ENCODE measurements at regions of chr7 and their contacts with region 1.

Region 1: DNA sequence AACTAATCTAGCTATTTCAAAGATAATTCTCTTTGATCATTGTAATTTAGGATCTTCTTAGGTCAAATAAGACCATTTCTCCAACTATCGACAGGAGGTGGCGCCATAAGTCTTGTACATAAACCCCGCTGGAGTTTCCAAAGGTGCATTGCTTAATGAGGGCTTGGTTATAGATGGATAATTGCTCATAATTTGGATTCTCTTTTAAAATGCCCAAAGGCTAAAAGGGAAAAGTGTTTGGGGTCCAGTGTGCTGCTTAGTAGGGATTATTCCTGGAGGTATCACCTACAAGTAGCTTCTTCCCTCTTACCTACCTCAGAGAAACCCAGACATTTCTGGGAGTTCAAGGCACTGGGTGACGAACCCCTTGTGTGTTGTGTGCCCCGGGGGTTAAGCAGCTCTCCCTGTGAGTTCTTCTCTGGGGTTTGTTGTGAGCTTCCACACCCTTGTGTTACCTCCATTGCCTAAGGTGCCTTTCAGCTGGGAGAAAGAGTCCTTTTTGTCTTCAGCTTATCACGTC is 75.2 kb downstream of the PAXIP1 start:
- DNase-seq: peak; percentile 88
- ATAC-seq: peak; percentile 65
- H3K4me3 Mint-ChIP-seq: peak overlapping the region; percentile 99
- H3K27ac Mint-ChIP-seq: peak overlapping the region; percentile 96
- H3K4me1 Mint-ChIP-seq: peaks cover 22% of the 10 kb centered on the region
- H3K27me3 Mint-ChIP-seq: no peaks in the 10 kb centered on the region

Region 2: GRCh38 chr7:154953006-154953684 is 25.5 kb after region 1 on chr7:
- CTCF ChIA-PET with region 1: interaction called, 90 read pairs
- POLR2A ChIA-PET with region 1: interaction called, 3 read pairs
- intact Hi-C with region 1: loop called (anchors 1 kb)
- DNase-seq: peak; percentile 83
- ATAC-seq: peak; percentile 57
- H3K4me3 Mint-ChIP-seq: no peak overlapping the region
- H3K27ac Mint-ChIP-seq: no peak overlapping the region
- H3K4me1 Mint-ChIP-seq: no peaks in the 10 kb centered on the region
- H3K27me3 Mint-ChIP-seq: no peaks in the 10 kb centered on the region

Region 3: DNA sequence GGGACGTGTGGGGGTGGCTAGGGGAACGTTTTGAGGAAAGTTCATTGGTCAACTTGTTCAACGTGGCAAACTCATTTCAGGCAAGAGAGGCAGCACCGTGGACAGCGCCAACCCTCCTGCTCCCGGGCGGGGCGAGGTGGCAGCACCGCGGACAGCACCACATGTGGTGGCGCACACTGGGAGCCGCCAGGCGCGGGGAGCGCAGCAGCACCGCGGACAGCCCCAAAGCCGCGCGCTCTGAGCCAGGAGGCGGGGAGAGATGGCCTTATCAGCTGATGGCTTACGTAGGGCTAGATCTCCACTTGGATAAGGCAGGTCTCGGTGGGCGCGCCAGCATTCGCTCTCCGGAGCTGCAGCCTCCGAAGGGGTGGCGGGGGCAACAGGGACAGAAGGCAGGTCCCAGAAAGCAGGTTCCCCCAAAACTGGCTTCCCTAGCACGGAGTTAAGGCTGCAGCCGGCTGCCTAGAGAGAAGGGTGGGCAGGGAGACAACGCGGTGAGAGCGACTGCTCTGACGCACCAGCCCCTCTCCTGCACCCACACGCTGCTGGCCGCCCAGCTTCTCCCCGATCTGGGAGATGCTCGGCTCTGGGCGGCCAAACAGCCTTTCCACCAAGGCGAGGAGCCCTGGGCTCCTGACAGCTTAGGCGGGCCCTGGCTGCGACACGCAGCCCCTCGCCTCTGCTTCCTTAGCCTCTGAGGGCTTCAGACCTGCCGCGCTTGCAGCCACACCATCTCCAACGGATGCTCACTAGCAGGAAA is 142.5 kb after region 1 on chr7 and contains the start of gene HTR5A:
- CTCF ChIA-PET with region 1: interaction called, 4 read pairs
- POLR2A ChIA-PET with region 1: no interaction called
- intact Hi-C with region 1: loop called in 1 of 2 experiments (anchors 1 kb)
- DNase-seq: peak; percentile 93
- ATAC-seq: peak; percentile 100
- H3K4me3 Mint-ChIP-seq: no peak within 1 kb of the TSS
- H3K27ac Mint-ChIP-seq: no peak within 1 kb of the TSS
- H3K4me1 Mint-ChIP-seq: no peaks in the 10 kb centered on the region
- H3K27me3 Mint-ChIP-seq: peaks cover 32% of the 10 kb centered on the region
- total RNA-seq, gene HTR5A: not detected

Region 4: DNA sequence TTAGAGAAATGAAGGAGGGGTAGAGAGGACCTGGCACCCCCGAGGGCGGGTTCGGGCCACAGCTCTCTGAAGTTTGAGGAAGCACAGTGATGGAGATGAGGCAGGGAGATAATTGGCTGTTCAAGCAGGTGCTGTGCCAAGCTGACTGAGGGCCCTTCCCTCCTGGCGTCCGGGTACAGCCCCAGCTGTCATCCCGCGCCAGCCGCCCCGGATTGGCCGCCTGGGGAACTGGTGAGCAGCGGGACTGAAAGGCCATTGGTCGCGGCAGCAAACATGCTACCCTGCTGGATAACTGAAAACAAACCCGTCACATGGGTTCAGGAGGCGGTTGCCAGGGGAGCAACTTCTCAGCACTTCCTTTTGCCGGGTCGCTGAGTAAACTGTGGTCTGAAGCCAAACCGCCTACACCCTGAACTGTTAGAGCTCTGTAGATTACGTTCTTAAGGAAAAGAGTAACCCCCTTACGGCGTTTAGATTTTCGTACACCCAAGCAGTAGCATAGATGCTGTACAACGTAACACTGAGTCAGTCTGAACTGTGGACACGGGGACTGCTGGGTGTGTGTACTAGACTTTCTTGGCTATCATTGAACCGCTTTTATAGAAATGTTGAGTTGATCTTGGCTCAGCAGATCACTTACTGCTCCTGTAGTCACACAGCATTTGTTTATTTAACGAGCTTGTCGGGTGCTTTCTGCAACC is 371.3 kb after region 1 on chr7:
- CTCF ChIA-PET with region 1: interaction called, 10 read pairs
- POLR2A ChIA-PET with region 1: no interaction called
- intact Hi-C with region 1: loop called (anchors 1 kb)
- DNase-seq: peak; percentile 98
- ATAC-seq: peak; percentile 83
- H3K4me3 Mint-ChIP-seq: peak overlapping the region; percentile 96
- H3K27ac Mint-ChIP-seq: peak overlapping the region; percentile 93
- H3K4me1 Mint-ChIP-seq: peaks cover 33% of the 10 kb centered on the region
- H3K27me3 Mint-ChIP-seq: no peaks in the 10 kb centered on the region

Region 5: DNA sequence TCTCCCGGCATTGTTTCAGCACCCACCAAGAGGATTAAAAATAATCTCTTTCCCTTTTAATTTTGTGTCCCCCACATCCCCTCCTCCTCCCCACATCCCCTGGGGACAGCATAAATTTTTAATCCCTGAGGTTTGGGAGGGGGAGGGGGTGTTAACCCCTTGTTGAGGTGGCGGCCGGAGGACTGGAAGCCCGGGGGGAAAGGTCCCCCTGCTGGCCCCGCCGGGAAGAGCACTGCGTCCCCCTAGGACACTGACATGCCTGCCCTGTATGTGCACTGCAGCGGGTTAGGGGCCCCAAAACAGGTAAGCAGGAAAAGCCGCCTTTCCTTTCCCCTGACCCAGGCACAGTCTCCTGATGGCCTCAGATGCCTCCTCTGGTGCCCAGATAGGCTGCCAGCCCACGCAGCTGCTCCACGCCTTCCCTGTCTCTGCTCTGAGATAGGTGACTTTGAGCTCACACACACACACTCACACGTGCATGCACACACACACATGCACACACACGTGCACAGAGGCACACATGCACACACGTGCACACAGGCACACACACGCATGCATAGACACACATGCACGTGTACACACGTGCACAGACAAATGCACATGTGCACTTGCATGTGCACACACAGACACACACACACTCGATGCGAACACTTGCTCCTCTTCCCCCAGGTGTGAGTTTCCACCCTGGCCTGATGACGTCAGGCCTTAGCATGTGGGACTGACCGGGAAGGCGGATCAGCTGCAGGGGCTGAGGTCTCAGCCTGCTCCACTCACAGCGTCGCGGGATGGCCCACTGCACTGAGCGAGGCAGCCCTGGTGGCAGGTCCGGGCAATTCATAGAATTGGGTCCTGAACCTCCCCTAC is 606.4 kb after region 1 on chr7:
- CTCF ChIA-PET with region 1: interaction called, 3 read pairs
- POLR2A ChIA-PET with region 1: no interaction called
- intact Hi-C with region 1: loop called in 1 of 2 experiments (anchors 5 kb)
- DNase-seq: peak; percentile 69
- ATAC-seq: peak; percentile 69
- H3K4me3 Mint-ChIP-seq: peak overlapping the region; percentile 37
- H3K27ac Mint-ChIP-seq: no peak overlapping the region
- H3K4me1 Mint-ChIP-seq: peaks cover 15% of the 10 kb centered on the region
- H3K27me3 Mint-ChIP-seq: peaks cover 64% of the 10 kb centered on the region

Region 6: DNA sequence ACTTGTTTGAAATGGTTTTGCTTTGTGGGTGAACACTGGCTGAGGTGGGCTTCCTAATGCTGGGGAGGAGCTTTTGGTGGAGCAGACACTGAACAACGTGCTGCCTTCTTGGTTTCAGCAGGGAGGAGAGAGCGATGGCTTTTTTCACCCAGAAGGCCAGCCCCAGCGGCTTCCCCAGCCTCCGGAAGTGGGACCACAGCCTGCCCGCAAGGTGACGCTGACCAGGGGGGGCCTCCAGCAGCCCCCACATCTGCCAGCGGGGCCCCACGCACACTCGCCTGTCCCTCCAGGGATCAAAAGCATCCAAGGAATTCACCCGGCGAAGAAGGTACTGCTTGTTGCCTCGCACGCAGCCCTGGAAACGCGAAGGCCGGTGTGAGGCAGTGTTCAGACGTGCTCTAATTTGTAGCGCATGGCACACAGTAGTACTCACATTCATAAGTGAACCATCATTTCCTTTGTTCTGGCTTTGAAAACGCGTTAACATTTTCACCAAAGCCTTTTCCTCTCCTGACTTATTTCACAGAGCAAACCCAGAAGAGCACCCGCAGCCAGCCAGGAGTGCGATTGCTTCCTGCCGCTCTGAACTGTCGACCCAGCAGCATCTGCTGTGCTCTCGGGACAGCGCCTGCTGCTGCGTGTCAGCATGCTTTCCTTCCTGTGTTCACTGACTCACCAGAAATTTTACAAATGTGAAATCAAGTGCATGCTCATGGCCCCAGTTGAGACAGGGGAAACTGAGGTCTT is 836.2 kb after region 1 on chr7:
- CTCF ChIA-PET with region 1: interaction called, 5 read pairs
- POLR2A ChIA-PET with region 1: no interaction called
- intact Hi-C with region 1: loop called in 1 of 2 experiments (anchors 1 kb)
- DNase-seq: peak; percentile 84
- ATAC-seq: peak; percentile 83
- H3K4me3 Mint-ChIP-seq: peak overlapping the region; percentile 74
- H3K27ac Mint-ChIP-seq: peak overlapping the region; percentile 97
- H3K4me1 Mint-ChIP-seq: peaks cover 52% of the 10 kb centered on the region
- H3K27me3 Mint-ChIP-seq: no peaks in the 10 kb centered on the region

Measured in activated CD4-positive, alpha-beta T cell treated with anti-CD3 and anti-CD28 coated beads for 36 hours (primary cell).